Mammary epithelial cell (primary cell): ENCODE measurements at regions of chr1 and their contacts with region 1.

Region 1: GRCh38 chr1:186605762-186606350 is 74.4 kb downstream of the PTGS2 start:
- DNase-seq: peak; percentile 64
- H3K4me3 ChIP-seq: no peak overlapping the region
- H3K27ac ChIP-seq: no peak overlapping the region
- H3K4me1 ChIP-seq: no peaks in the 10 kb centered on the region
- H3K27me3 ChIP-seq: no peaks in the 10 kb centered on the region
- CTCF ChIP-seq: peak; percentile 91 to 94

Region 2: GRCh38 chr1:186404454-186405051 is 201.3 kb before region 1 on chr1:
- CTCF ChIA-PET with region 1: interaction called, 4 read pairs
- dilution Hi-C with region 1: no loop called
- in situ Hi-C with region 1: no loop called
- intact Hi-C with region 1: loop called (anchors 1 kb)
- DNase-seq: peak; percentile 32
- H3K4me3 ChIP-seq: no peak overlapping the region
- H3K27ac ChIP-seq: no peak overlapping the region
- H3K4me1 ChIP-seq: no peaks in the 10 kb centered on the region
- H3K27me3 ChIP-seq: no peaks in the 10 kb centered on the region
- CTCF ChIP-seq: peak; percentile 62 to 83

Region 3: GRCh38 chr1:186550832-186551231 is 55.0 kb before region 1 on chr1:
- CTCF ChIA-PET with region 1: no interaction called
- dilution Hi-C with region 1: no loop called
- in situ Hi-C with region 1: no loop called
- intact Hi-C with region 1: no loop called
- DNase-seq: no peak
- H3K4me3 ChIP-seq: no peak overlapping the region
- H3K27ac ChIP-seq: no peak overlapping the region
- H3K4me1 ChIP-seq: no peaks in the 10 kb centered on the region
- H3K27me3 ChIP-seq: no peaks in the 10 kb centered on the region
- CTCF ChIP-seq: no peak

Region 4: DNA sequence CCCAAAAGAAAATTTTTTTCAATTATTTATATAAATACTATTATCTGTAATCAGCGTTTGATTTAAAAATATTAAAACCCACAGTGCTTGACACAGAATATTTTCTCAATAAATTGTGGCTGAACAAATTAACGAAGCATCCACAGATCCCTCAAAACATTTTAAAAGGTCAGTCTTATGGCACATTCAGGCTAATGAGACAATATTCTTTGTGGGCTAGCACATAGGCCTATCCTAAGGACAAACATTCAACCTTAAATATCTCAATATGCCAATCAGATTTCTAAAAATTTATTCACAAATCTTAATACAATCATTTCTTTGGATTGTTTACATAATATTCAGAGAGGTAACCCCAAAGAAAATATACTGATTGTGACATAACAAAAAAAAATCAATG is 66.3 kb after region 1 on chr1:
- CTCF ChIA-PET with region 1: no interaction called
- dilution Hi-C with region 1: no loop called
- in situ Hi-C with region 1: no loop called
- intact Hi-C with region 1: no loop called
- DNase-seq: no peak
- H3K4me3 ChIP-seq: no peak overlapping the region
- H3K27ac ChIP-seq: no peak overlapping the region
- H3K4me1 ChIP-seq: no peaks in the 10 kb centered on the region
- H3K27me3 ChIP-seq: no peaks in the 10 kb centered on the region
- CTCF ChIP-seq: no peak

Region 5: GRCh38 chr1:186708613-186709203 is 102.9 kb after region 1 on chr1:
- CTCF ChIA-PET with region 1: no interaction called
- dilution Hi-C with region 1: no loop called
- in situ Hi-C with region 1: no loop called
- intact Hi-C with region 1: loop called (anchors 1 kb)
- DNase-seq: peak; percentile 35
- H3K4me3 ChIP-seq: no peak overlapping the region
- H3K27ac ChIP-seq: no peak overlapping the region
- H3K4me1 ChIP-seq: no peaks in the 10 kb centered on the region
- H3K27me3 ChIP-seq: no peaks in the 10 kb centered on the region
- CTCF ChIP-seq: no peak

Region 6: GRCh38 chr1:186806477-186806876 is 200.6 kb after region 1 on chr1:
- CTCF ChIA-PET with region 1: interaction called, 8 read pairs
- dilution Hi-C with region 1: no loop called
- in situ Hi-C with region 1: loop called in 1 of 2 experiments (anchors 25 kb)
- intact Hi-C with region 1: loop called (anchors 1 kb)
- DNase-seq: peak; percentile 27
- H3K4me3 ChIP-seq: no peak overlapping the region
- H3K27ac ChIP-seq: no peak overlapping the region
- H3K4me1 ChIP-seq: no peaks in the 10 kb centered on the region
- H3K27me3 ChIP-seq: no peaks in the 10 kb centered on the region
- CTCF ChIP-seq: peak; percentile 35 to 59

Region 7: DNA sequence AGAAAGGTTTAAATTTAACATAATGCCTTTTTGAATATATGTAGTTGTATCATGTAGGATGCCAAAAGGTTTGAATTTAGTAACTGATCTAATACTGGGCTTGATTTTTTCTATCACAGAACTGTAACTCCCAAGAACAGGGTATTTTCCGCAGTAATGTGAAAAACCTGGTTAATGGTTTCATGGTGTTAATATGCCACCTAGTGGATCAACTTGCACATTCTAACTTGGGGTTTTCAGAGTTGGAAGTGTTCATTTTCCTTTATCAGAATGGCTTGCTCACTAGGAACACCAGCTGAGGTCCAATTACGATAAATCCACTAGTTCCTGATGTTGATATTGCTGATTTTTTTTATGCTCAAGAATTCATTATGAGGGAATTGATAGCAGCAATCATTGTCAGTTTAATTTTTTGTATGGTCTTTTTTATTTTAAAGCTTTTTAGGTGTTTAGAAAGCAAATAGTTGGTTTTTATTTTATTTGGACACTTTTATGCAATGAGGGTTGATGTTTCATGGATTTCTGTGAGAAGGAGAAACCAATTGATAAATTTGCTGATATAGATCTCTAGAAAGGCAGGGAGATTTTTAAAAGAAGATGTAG is 380.1 kb after region 1 on chr1:
- CTCF ChIA-PET with region 1: no interaction called
- dilution Hi-C with region 1: loop called (anchors 5 kb)
- in situ Hi-C with region 1: loop called (anchors 5 to 10 kb)
- intact Hi-C with region 1: loop called (anchors 1 kb)
- DNase-seq: peak; percentile 40
- H3K4me3 ChIP-seq: no peak overlapping the region
- H3K27ac ChIP-seq: no peak overlapping the region
- H3K4me1 ChIP-seq: no peaks in the 10 kb centered on the region
- H3K27me3 ChIP-seq: no peaks in the 10 kb centered on the region
- CTCF ChIP-seq: peak; percentile 56 to 73